ENCODE measurements at regions of chr1 and their contacts with region 1.

Region 1: DNA sequence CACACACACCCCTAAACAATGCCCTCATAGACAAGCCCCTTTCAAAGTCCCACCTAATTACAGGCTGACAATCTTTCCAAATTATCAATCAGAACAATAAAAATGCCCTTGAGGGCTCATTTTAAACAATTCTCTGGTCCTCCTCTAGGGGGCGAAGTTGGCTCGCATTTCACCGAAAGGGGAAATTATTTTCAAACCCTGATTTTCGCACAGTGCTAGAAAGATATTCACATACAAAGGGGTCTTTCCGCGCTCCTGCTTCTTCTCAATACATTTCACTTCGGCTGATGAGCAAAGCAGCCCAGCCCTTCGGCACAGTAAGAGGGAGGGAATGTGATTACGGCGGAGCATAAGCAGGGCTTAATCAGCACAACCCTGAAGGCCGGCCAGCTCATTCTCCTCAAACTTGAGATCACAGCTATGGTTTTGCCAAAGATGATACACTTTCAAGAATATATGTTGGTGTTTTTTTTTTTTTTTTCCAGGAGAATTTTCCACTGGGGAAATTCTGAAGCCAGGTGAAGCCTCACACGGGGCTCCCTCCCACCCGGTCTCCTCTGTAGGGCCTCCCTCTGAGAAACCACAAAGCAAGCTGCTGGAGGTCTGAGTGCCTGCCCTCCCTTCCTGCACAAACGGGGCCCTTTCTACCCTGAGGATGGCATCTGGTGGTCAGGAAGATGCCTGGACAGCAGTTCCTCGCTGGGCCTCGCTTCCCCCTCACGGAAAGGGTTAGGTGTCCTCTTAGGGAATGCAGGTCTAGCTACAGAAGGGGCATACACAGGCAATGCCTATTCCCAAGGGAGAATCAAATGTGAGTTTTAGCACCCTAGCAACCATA is 66.9 kb downstream of the GNG12 start:
- DNase-seq: no peak
- ATAC-seq: peak; percentile 74

Region 2: DNA sequence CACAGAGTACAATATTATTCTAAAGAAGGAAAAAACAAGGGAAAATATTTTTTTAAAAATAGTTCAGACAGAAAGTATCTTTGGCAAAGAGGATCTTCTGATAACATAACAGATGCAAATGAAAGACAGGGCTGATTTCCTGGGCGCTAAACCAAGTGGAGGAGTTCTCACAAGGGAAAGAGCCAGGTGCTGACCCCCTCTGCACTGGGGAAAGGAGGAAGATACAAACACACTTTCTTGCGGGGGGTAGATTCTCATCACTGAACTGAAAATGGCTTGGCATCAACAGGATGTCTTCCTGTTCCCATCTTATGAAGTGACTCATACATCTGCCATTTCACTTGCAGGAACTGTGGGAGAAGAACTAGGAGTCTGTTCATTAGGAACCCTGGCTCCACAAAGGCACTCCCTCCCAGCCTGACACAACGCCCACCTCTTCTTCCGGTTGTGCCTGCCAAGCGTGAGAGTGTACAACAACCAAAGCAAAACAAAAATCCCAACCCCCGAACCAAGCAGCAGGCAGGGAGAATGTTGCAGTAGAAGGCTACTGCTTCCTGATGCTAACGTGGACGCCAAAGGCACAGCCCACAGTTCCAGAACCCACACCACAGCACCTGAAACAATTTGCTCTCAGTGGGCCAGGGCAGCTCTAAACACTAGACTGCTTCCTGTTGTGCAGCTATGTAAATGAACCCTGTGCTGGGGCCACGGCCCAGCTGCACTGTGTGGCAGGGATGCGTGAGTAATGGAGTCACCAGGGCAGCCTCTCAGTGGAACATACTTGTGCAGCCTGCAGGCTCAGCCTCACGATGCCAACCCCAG is 30.3 kb before region 1 on chr1:
- intact Hi-C with region 1: no loop called
- DNase-seq: peak; percentile 81
- ATAC-seq: peak; percentile 80

Region 3: DNA sequence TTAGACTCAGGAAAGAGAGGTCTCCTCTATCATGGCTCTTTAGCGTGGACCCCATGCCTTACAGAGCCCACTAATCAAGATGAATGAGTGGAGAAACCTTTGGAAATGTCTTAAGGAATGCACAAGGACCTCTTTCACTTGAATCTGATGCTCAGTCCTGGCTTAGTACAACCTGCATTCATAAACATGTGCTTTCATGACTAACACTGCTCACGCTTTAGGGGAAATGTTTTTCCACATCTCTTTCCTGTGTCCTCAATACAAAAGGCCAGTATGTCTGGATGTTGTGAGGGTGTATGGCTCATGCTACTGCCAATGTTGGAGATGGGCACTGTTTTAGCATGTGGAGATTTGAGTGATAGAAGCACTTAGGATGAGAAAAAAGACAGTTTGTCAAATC is 81.1 kb after region 1 on chr1:
- intact Hi-C with region 1: loop called (anchors 5 kb)
- DNase-seq: no peak
- ATAC-seq: no peak

Region 4: GRCh38 chr1:68111519-68112436 is 345.4 kb after region 1 on chr1:
- intact Hi-C with region 1: loop called (anchors 5 kb)
- DNase-seq: peak; percentile 79
- ATAC-seq: peak; percentile 84